ENCODE measurements at regions of chr16 and their contacts with region 1.

Region 1: DNA sequence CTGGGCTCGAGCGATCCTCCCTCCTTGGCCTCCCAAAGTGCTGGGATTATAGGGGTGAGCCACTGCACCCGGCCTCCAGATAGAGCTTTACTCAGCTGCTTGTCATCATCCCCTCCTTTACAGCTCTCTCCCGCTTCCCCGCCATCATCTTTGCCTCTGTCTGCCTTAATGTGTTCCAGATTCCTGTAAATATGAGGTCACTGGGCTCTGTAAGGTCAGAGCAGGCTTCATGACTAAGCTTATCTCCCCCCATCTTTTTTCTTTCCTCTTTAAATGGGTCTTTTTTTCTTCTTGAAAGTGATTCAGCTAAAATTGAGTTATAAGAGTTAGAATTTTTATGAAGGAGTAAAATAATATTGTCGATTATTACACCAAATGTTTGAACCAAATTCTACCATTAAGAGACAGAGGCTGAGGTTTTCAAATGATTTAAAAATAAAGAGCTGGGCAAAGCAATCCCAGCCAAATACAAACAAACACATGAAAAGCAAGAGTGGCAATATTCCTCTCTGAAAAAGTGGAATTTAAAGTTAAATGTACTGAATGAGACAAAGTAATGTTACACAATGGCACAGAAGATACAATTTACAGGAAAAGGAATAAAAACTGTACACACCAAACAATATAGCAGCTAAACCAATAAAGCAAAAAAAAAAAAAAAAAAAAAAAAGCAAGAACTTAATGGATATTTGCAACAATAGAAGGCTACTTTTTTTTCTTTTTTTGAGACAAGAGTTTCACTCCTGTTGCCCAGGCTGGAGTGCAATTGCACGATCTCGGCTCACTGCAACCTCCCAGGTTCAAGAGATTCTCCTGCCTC is 62.1 kb downstream of the CRISPLD2 start:
- DNase-seq: no peak

Region 2: GRCh38 chr16:84925092-84925772 is 43.3 kb after region 1 on chr16:
- in situ Hi-C with region 1: loop called (anchors 5 kb)
- DNase-seq: peak; percentile 37

Region 3: DNA sequence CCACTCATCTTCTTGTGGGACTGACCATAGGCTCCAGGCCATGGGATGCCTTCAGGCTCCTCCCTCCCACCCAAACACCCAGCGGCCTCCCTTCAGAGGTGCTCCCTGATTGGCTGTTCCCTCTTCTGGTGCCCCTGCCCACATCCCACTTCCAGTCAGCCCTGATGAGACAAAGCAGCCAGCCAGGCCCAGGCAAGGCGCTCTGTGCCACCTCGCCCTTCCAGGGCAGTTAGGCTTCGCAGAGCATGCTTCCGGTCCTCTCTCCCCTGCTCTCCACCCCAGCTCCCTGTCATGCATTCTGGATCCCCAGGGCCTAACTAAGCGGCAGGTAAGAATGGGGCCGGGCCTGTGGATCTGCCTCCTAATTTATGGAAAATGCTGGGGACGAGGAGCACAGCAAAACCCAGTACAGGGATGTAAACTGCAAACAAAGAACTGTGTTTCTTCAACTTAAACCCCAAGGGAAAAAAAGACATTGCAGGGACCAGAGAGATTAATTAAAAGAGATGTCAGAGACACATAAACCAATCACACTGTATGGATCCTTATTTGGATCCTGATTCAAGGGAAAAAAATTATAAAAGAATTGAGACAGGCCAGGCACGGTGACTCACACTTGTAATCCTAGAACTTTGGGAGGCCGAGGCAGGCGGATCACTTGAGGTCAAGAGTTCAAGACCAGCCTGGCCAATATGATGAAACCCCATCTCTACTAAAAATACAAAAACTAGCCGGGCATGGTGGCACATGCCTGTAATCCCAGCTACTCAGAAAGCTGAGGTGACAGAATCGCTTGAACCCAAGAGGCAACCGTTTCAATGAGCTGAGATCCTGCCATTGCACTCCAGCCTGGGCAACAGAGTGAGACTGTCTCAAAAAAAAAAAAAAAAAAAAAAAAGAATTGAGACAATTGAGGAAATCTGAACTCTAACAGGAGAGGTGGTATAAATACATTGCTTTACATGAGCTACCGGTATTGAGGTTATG is 103.5 kb after region 1 on chr16:
- in situ Hi-C with region 1: no loop called
- DNase-seq: no peak